ENCODE measurements at regions of chr3 and their contacts with region 1.

Region 1: GRCh38 chr3:73100741-73101559 is 39.5 kb downstream of the EBLN2 start:
- DNase-seq: peak; percentile 83
- H3K4me3 Mint-ChIP-seq: no peak overlapping the region
- H3K27ac Mint-ChIP-seq: no peak overlapping the region
- H3K4me1 Mint-ChIP-seq: no peaks in the 10 kb centered on the region
- H3K27me3 Mint-ChIP-seq: peaks cover 5% of the 10 kb centered on the region

Region 2: GRCh38 chr3:73432023-73432705 is 331.2 kb after region 1 on chr3:
- CTCF ChIA-PET with region 1: interaction called, 10 read pairs
- DNase-seq: no peak
- H3K4me3 Mint-ChIP-seq: no peak overlapping the region
- H3K27ac Mint-ChIP-seq: no peak overlapping the region
- H3K4me1 Mint-ChIP-seq: no peaks in the 10 kb centered on the region
- H3K27me3 Mint-ChIP-seq: peaks cover 5% of the 10 kb centered on the region

Region 3: GRCh38 chr3:73502609-73503583 is 401.9 kb after region 1 on chr3:
- CTCF ChIA-PET with region 1: interaction called, 14 read pairs
- DNase-seq: peak; percentile 68
- H3K4me3 Mint-ChIP-seq: no peak overlapping the region
- H3K27ac Mint-ChIP-seq: no peak overlapping the region
- H3K4me1 Mint-ChIP-seq: no peaks in the 10 kb centered on the region
- H3K27me3 Mint-ChIP-seq: peaks cover 4% of the 10 kb centered on the region

Measured in activated naive CD4-positive, alpha-beta T cell treated with anti-CD3 and anti-CD28 coated beads, Interleukin-2, amount 10 ng/mL, durations not matched to agents 7 days and 5 days (primary cell).